ENCODE measurements at regions of chr1 and their contacts with region 1.

Region 1: GRCh38 chr1:100710906-100711682 is 8.4 kb upstream of the VCAM1 start:
- DNase-seq: no peak
- H3K4me3 Mint-ChIP-seq: no peak overlapping the region
- H3K27ac Mint-ChIP-seq: no peak overlapping the region
- H3K4me1 Mint-ChIP-seq: peaks cover 21% of the 10 kb centered on the region
- H3K27me3 Mint-ChIP-seq: peaks cover 5% of the 10 kb centered on the region

Region 2: DNA sequence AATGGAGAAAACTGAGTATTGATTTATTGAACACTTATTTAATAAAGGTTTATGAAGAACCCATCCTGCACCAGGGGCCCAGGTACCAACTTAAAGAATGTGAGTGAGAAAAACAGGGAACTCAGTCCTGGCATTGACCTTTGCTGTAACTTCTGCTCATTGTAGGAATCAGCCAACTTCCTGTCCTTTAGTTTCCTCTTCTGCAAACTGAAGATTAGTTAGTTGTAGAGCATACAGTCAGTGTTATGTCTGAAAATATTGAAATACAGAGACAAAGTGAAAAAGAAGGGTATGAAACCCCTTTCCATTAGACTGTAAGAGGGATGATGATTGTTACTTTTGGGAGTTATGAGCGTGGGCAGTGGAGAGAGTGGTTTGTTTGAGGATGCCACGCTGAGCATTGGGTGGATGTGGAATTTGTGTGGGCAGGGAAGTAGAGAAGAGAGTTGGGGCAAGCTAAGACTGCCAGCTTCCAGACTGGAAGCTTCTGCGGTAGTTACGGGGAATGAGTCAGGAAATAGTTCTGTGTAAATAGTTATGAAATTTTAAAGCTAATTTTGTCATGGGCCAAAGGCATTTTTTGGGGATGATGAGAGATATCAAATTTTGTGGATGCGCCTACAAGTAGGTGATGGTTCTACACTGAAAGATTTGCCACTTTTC is 83.9 kb before region 1 on chr1:
- intact Hi-C with region 1: loop called (anchors 5 kb)
- DNase-seq: no peak
- H3K4me3 Mint-ChIP-seq: no peak overlapping the region
- H3K27ac Mint-ChIP-seq: no peak overlapping the region
- H3K4me1 Mint-ChIP-seq: peaks cover 19% of the 10 kb centered on the region
- H3K27me3 Mint-ChIP-seq: peaks cover 8% of the 10 kb centered on the region

Region 3: GRCh38 chr1:100773444-100773843 is 62.4 kb after region 1 on chr1:
- intact Hi-C with region 1: no loop called
- DNase-seq: no peak
- H3K4me3 Mint-ChIP-seq: no peak overlapping the region
- H3K27ac Mint-ChIP-seq: no peak overlapping the region
- H3K4me1 Mint-ChIP-seq: no peaks in the 10 kb centered on the region
- H3K27me3 Mint-ChIP-seq: peaks cover 10% of the 10 kb centered on the region